ENCODE measurements at regions of chr10 and their contacts with region 1.

Region 1: DNA sequence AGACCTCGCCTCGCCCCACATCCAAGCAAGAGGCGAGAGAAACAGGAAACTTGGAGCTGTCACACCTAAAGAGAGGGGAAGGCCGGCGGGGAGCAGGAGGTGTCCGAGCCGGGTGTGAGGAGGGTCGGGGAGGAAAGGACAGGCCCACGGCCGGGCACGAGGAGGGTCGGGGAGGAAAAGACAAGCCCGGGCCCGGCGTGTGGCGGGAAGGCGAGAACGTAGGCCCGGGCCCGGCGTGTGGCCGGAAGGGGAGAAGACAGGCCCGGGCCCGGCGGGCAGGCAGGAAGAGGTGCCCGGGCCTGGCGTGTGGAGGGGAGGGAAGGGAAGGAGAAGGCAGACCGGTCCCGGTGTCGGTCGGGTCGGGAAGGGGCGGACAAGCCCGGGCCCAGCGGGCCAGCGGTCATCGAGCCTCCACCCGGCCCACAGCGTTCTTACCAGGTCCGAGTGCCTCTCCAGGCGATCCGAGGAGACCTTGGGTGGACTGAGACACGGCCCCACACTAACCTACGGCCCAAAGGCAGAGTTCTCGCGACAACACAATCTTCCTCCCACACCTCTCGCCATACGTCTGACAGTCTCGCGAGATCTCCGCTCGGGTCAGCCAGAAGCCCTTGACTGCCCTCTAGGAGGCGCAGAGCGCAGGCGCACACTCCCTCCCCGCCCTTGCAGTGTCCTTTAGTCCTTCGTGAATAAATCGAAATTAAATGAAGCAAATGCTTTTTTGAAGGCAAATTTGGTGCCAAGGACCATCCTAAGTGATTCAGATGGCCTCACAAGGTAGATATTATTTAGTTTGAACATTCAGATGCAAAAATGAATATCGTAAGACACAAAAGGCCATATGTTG is at the start of gene NCOA4:
- DNase-seq: peak; percentile 98
- ATAC-seq: peak; percentile 98
- H3K4me3 Mint-ChIP-seq: peak within 1 kb of the TSS; percentile 99
- H3K27ac Mint-ChIP-seq: peak within 1 kb of the TSS; percentile 98
- H3K4me1 Mint-ChIP-seq: peaks cover 53% of the 10 kb centered on the region
- H3K27me3 Mint-ChIP-seq: peaks cover under 1% of the 10 kb centered on the region
- total RNA-seq, gene NCOA4: 119 to 120 TPM

Region 2: GRCh38 chr10:46019569-46020343 is 10.6 kb before region 1 on chr10:
- CTCF ChIA-PET with region 1: interaction called, 52 read pairs
- POLR2A ChIA-PET with region 1: interaction called, 3 read pairs
- DNase-seq: no peak
- ATAC-seq: no peak
- H3K4me3 Mint-ChIP-seq: no peak overlapping the region
- H3K27ac Mint-ChIP-seq: peak overlapping the region; percentile 67
- H3K4me1 Mint-ChIP-seq: peaks cover 58% of the 10 kb centered on the region
- H3K27me3 Mint-ChIP-seq: no peaks in the 10 kb centered on the region

Region 3: DNA sequence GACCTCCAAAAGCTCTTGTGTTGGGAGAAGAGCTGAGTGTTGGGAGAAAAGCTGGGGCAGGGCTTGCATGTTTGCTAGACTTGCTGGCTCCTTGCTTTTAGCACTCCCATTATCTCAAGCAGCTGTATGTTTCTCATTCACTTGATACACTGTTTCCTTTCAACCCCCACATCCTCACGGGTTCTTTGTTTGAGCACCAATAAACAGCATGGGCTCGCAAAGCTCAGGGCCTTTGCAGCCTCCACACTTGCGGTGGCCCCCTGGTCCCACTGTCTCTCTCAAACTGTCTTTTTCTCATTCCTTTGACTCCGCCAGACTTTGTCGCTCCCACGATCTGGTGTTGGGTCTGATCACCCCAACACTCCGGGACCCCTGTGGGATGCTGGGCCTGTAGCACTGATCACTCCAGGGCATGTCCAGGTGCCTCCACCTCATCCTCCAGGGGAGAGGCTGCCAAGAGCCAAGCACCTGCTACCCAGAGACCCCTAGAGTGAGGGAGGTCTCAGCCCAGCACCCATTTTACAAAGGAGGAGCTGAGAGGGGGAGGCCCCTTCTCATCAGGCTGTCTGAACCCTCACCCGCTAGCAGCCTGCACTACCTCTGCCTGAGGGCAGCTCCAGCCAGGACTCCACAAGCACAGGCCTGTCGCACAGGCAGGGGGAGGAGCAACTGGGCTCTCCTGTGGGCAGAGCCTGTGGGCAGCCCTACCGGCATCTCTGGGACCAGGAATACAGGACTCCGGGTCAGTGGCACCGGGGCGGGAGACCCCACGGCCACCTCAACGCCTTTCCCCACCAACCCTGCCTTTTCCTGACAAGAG is 64.8 kb after region 1 on chr10:
- CTCF ChIA-PET with region 1: interaction called, 13 read pairs
- POLR2A ChIA-PET with region 1: interaction called, 3 read pairs
- DNase-seq: peak; percentile 29
- ATAC-seq: no peak
- H3K4me3 Mint-ChIP-seq: peak overlapping the region; percentile 23
- H3K27ac Mint-ChIP-seq: peak overlapping the region; percentile 95
- H3K4me1 Mint-ChIP-seq: peaks cover under 1% of the 10 kb centered on the region
- H3K27me3 Mint-ChIP-seq: no peaks in the 10 kb centered on the region

Region 4: DNA sequence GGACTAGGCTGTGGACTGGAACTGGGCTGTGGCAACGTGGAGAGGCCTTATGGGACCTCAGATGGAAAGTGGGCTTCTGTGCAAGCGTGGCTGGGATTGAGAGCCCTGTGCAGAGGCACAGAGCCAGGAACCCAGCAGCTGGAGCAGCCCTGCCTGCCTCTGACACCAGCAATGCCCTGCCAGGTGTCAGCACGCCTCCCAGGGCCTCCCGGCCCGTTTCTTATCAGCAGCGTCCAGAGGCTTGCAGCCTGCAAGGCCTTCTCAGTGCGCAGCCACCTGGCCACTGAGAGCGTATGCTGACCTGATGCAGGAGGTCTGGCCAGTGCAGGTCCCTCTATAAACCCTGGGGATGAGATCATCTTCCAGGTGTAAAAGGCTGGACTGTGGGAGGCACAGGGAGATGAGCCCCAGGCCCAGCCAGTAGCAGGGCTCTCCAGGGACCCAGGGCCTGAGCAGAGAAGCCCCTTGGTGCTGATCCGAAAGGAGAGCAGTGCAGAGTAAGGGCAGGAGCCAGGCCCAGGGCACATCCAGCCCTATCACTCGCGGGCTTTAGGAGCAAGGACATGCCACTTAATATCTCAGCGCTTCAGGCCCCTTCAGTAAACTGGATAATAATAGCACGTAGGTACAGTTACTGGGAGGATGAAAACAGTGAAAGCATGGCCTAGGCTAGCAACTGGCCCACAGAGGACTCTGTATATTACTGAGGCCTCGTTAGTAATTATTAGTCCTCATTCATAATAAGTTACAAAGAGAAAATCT is 217.7 kb after region 1 on chr10:
- CTCF ChIA-PET with region 1: no interaction called
- POLR2A ChIA-PET with region 1: no interaction called
- DNase-seq: no peak
- ATAC-seq: no peak
- H3K4me3 Mint-ChIP-seq: no peak overlapping the region
- H3K27ac Mint-ChIP-seq: no peak overlapping the region
- H3K4me1 Mint-ChIP-seq: peaks cover 2% of the 10 kb centered on the region
- H3K27me3 Mint-ChIP-seq: no peaks in the 10 kb centered on the region